Posterior vena cava (tissue), 2 donors: ENCODE measurements at regions of chr19 and their contacts with region 1.

Region 1: GRCh38 chr19:10662384-10663251 is 8.5 kb downstream of the ILF3 start:
- DNase-seq: no peak

Region 2: DNA sequence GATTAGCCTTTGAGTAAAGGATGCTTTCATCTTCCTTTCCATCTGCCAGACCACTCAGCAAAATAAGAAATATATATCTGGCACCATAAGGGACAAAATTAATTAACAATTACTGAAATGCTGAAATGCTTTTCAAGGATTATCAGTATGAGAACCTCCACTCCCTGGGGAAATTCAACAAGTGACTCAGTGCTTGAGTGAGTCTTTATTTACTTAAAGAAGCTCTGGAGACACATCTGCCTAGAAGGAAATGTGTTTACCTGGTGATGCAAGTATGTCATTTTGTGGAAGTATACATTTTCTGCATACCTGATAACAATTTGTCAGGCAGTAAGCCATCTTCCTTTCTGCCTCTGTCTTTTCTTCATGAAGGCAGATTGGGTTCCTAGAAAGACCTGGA is 1187.6 kb before region 1 on chr19:
- intact Hi-C with region 1: no loop called
- DNase-seq: no peak

Region 3: GRCh38 chr19:9891609-9892373 is 770.8 kb before region 1 on chr19:
- intact Hi-C with region 1: loop called in 1 of 2 experiments (anchors 5 kb)
- DNase-seq: no peak

Region 4: DNA sequence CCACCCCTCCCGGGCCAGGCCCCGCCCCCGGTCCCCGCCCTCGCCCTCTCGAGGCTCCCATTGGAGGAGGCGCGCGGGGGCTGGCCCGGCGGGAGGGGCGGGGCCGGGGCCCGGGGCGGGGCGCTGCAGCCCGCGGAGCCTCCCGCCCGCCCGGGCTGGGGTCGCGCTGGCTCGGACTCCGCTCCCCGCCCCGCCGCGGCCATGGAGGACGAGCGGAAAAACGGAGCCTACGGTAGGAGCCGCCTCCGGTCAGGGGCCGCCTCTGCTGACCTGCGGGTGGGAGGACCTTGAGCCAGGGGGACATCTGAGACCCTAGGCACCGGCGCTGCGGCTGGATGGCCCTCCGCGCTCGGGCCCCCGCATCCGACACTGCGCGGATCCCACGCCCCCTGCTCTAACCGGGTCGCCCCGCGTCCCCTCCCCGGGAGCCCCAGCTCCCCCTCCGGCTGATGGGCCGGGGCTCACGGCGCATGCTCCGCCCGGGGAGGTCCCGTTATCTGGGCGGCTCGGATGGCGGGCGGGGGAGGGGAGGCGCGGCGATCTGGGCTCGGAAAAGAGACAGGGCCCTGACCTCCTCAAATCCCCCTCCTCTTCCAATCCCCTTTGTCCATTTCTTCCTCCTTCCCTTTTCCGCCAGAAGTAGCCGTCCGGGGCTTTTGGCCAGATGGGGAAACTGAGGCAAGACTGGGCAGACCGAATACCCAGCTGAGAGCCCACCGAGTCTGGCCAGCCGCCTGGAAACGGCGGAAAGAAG is 60.1 kb before region 1 on chr19:
- intact Hi-C with region 1: no loop called
- DNase-seq: peak; percentile 93

Region 5: DNA sequence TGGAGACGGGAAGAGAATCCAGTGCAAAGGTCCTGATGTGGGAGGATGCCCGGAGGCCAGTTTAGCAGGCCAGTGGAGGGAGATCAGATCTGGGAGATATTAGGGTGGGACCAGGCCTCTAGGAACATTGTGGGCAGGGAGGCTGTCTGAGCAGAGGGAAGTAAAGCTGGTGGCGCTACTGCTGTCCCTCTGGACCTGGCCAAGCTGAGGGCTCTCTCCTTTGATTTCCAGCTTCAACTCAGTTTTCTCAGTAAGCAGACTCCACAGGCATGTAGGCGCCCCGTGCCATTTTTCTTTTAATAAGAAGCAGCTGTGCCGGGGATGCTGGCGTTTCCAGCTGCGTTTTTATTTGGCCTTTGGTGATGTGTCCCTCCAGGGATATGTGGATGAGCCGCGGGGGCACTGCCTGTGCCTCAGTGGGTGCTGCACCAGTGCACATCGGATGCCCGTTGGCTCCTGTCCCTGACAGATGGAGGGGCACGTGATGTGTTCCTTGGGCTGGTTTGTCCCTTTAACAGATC is 62.0 kb after region 1 on chr19:
- intact Hi-C with region 1: no loop called
- DNase-seq: no peak

Region 6: GRCh38 chr19:12628040-12629022 is 1965.7 kb after region 1 on chr19:
- intact Hi-C with region 1: no loop called
- DNase-seq: no peak